ENCODE measurements at regions of chr3 and their contacts with region 1.

Region 1: DNA sequence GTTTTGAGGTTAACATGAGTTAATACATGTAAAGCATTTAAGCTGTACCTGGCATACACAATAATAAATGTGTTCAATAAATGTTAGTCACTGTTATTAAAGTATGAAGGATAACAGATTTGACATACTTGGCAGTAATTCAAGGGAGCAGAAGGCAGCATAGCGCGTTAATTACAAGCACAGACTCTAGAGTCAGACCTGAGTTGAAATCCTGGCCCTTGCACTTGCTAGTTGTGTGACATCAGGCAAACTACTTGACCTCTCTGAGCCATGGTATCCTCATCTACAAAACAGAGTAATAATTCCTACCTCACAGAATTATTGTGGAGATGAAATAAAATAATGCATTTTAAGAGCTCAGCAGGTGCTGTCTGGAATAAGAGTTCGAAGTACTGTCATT is 5.4 kb downstream of the IFT122 start:
- DNase-seq: no peak
- ATAC-seq: no peak
- H3K4me3 ChIP-seq: no peak overlapping the region
- H3K27ac ChIP-seq: no peak overlapping the region
- H3K4me1 ChIP-seq: 0 out of 2 replicates have a peak, but pooled peaks cover 6% of the 10 kb centered on the region
- H3K27me3 ChIP-seq: no peaks in the 10 kb centered on the region
- CTCF ChIP-seq: no peak
- EP300 ChIP-seq: no peak
- POLR2A ChIP-seq: no peak
- RAD21 ChIP-seq: no peak

Region 2: GRCh38 chr3:129336093-129336709 is 109.3 kb before region 1 on chr3:
- CTCF ChIA-PET with region 1: no interaction called
- POLR2A ChIA-PET with region 1: interaction called, 10 read pairs
- RAD21 ChIA-PET with region 1: no interaction called
- SMC1A ChIA-PET with region 1: no interaction called
- in situ Hi-C with region 1: no loop called
- intact Hi-C with region 1: no loop called
- DNase-seq: no peak
- ATAC-seq: no peak
- H3K4me3 ChIP-seq: no peak overlapping the region
- H3K27ac ChIP-seq: no peak overlapping the region
- H3K4me1 ChIP-seq: no peaks in the 10 kb centered on the region
- H3K27me3 ChIP-seq: no peaks in the 10 kb centered on the region
- CTCF ChIP-seq: no peak
- EP300 ChIP-seq: no peak
- POLR2A ChIP-seq: no peak
- RAD21 ChIP-seq: no peak